Activated T-helper 2 cell treated with anti-CD3 and anti-CD28 coated beads, Interferon-gamma antibody, Interleukin-2, Interleukin-4, amounts not matched to agents 10 μg/mL and 5 μg/mL and 100 μg/mL, durations not matched to agents 14 hours and 24 hours and 36 hours (primary cell): ENCODE measurements at regions of chr14 and their contacts with region 1.

Region 1: DNA sequence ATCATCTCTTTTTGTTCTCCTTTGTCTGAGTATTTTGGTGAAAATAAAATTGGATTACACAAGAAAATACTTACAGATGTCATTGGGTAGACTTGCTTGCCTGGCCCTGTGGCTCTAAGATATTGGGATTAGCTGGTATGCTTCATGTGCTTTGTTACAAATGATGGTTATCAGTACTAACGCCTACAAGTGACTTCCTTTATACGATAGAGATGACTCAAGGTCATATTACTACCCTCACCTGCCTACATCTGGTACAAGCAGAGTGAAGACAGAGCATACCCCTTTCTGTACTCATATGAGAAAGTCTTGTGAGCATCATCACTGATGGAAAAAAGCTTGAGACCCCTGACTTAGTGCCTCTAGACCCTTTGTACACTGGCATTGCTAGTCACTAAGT is 48.2 kb downstream of the TDP1 start:
- DNase-seq: no peak
- H3K4me3 Mint-ChIP-seq: no peak overlapping the region
- H3K27ac Mint-ChIP-seq: peak overlapping the region; percentile 51
- H3K4me1 Mint-ChIP-seq: peaks cover 26% of the 10 kb centered on the region
- H3K27me3 Mint-ChIP-seq: no peaks in the 10 kb centered on the region

Region 2: GRCh38 chr14:89954070-89955028 is 49.6 kb before region 1 on chr14 and contains the start of gene EFCAB11:
- intact Hi-C with region 1: loop called (anchors 2 kb)
- DNase-seq: peak; percentile 96
- H3K4me3 Mint-ChIP-seq: peak within 1 kb of the TSS; percentile 87
- H3K27ac Mint-ChIP-seq: peak within 1 kb of the TSS; percentile 81
- H3K4me1 Mint-ChIP-seq: peaks cover 43% of the 10 kb centered on the region
- H3K27me3 Mint-ChIP-seq: no peaks in the 10 kb centered on the region
- total RNA-seq, gene EFCAB11: 7.1 and 9.0 TPM in 2 replicates

Region 3: DNA sequence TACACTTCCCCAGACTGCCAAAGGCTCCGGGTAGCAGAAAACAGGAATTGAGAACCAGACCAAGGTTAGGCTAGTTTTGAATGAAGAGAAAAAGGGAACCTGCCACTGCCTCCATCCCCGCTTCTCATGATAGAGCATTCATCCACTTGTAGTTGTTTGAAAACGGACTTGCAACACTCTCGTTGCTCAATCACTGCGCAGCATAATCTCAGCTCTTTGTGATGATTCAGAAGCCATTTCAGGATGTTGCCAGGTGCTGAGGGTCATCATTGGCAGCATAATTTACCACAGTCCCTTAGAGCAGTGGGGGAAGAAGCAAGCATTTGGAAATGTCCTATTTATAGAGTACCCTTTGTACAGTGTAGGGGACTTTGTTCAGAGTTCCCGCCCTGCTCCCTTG is 83.5 kb after region 1 on chr14:
- intact Hi-C with region 1: no loop called
- DNase-seq: no peak
- H3K4me3 Mint-ChIP-seq: no peak overlapping the region
- H3K27ac Mint-ChIP-seq: no peak overlapping the region
- H3K4me1 Mint-ChIP-seq: no peaks in the 10 kb centered on the region
- H3K27me3 Mint-ChIP-seq: peaks cover 24% of the 10 kb centered on the region

Region 4: DNA sequence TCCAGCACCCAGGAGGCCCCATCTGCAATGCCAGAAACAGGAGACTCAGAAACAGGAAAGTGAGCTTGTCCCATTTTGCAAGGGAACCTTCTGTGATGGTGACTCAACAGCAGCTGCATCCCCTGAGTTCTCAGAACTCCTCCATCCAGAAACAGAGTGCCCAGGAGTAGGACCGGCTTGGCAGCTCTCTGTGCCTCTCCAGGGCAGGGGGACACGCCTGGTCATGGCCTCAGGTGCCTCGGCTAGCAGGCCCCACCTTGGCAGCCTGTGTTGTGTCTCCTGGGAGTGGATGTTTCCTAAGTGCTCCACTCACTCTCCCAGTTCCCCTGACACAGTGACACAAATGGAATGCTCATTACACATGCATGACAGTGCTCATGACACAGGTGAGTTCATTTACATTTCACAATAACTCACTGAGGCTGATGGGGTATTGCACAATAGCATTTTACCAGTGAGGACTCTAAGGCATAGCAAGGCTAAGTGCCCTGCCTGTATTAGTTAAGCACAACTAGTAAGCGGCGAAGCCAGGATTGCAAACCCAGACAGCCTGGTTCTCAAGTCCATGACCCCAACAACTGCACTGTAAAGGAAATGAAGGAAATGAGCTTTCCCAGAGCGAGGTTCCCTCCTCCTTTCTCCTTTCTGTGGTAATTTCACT is 440.3 kb after region 1 on chr14:
- intact Hi-C with region 1: no loop called
- DNase-seq: no peak
- H3K4me3 Mint-ChIP-seq: no peak overlapping the region
- H3K27ac Mint-ChIP-seq: no peak overlapping the region
- H3K4me1 Mint-ChIP-seq: no peaks in the 10 kb centered on the region
- H3K27me3 Mint-ChIP-seq: peaks cover 2% of the 10 kb centered on the region